Aorta (tissue), 5 donors: ENCODE measurements at regions of chr1 and their contacts with region 1.

Region 1: DNA sequence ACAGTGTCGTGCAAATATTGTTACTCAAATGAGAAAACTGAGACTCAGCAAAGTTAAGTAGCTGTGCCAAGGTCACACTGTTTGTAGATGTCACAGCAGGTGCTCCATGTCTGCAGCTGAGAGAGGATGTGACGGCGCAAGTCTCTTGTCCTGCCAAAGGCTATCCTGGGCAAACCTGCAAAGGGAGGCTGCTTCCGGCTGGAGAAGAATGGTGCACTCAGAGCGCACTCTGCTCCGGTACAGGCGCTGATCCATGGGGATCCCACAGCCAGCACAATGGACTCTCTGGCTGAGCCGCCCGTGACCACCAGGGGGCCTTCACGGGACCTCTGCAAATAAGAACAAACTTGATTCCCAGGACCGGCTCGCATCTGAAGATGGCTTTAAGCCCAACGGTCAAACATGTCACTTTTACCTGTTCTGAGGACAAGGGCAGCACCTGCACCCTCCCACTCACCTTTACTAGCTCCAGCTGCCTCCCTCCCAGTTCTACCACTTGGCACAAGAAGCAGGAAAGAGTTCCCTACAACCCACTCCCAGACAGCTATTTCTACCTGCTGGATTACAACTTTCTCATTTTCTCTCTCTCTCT is 21.9 kb downstream of the RD3 start:
- DNase-seq: peak; percentile 82 to 93
- ATAC-seq: peak; percentile 81
- H3K4me3 ChIP-seq: no peak overlapping the region
- H3K27ac ChIP-seq: no peak overlapping the region
- H3K4me1 ChIP-seq: no peaks in the 10 kb centered on the region
- H3K27me3 ChIP-seq: no peaks in the 10 kb centered on the region

Region 2: DNA sequence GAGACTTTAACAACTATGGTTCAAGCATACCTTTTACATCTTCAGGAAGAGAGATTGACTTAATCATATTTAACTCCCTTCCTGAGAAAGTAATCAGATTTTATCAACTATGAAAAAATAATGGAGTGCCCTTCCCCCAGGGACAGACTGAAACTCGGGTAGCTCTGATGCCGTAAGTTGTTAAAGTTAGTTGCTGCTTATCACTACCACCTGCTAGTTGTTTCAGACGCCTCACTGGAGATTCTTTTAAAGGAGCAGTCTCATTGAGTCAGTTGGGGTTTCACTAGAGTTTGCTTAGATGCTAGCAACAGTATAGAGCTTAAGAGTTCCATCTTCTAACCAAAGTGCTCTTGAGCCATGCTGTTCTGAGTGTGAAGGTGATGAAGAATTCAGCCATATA is 160.4 kb before region 1 on chr1:
- intact Hi-C with region 1: no loop called
- DNase-seq: no peak
- ATAC-seq: no peak
- H3K4me3 ChIP-seq: no peak overlapping the region
- H3K27ac ChIP-seq: no peak overlapping the region
- H3K4me1 ChIP-seq: no peaks in the 10 kb centered on the region
- H3K27me3 ChIP-seq: no peaks in the 10 kb centered on the region

Region 3: GRCh38 chr1:211514030-211514754 is 44.2 kb after region 1 on chr1:
- intact Hi-C with region 1: loop called in 1 of 2 experiments (anchors 1 kb)
- DNase-seq: peak; percentile 90 to 92
- ATAC-seq: peak; percentile 89
- H3K4me3 ChIP-seq: no peak overlapping the region
- H3K27ac ChIP-seq: no peak overlapping the region
- H3K4me1 ChIP-seq: no peaks in the 10 kb centered on the region
- H3K27me3 ChIP-seq: no peaks in the 10 kb centered on the region

Region 4: GRCh38 chr1:211566431-211567025 is 96.5 kb after region 1 on chr1:
- intact Hi-C with region 1: no loop called
- DNase-seq: no peak
- ATAC-seq: no peak
- H3K4me3 ChIP-seq: no peak overlapping the region
- H3K27ac ChIP-seq: no peak overlapping the region
- H3K4me1 ChIP-seq: no peaks in the 10 kb centered on the region
- H3K27me3 ChIP-seq: no peaks in the 10 kb centered on the region

Region 5: DNA sequence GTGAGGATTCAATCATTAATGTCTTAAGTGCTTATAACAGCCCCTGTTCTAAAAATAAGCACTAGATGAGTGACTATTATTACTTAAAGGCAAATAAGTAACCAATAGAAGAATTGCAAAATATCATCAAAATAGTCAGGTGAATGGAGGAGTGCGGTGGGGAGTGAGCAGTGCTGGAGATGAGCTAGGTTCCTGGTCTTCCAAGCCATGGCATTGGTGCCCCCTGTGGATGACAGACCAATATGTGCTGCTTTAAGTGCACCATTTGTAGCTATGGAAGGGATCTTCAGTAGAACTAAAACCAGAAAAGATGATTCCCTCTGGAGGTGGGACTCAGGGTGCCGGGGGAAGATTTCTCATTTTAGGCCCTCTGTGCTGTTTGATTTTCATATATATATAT is 155.0 kb after region 1 on chr1:
- intact Hi-C with region 1: no loop called
- DNase-seq: no peak
- ATAC-seq: no peak
- H3K4me3 ChIP-seq: no peak overlapping the region
- H3K27ac ChIP-seq: no peak overlapping the region
- H3K4me1 ChIP-seq: no peaks in the 10 kb centered on the region
- H3K27me3 ChIP-seq: no peaks in the 10 kb centered on the region